ENCODE measurements at regions of chr1 and their contacts with region 1.

Region 1: DNA sequence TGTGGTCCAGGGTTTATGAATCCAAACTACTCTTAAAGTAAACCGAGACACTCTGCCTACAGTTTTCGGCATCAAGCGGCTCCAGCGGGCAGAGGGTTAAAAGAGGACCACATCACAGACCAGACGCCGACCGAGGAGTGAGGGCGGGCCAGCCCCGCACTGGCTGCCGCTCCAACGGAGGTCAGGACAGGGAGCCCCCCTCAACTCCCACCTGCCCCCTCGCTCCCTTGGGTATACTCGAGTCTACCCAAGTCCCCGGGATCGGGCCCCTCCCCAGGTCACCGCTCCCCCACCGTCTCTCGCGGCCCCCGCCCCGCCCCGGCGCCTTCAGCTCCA is 312 bp downstream of the ARNT start:
- DNase-seq: peak in 1 of 4 experiments; percentile 78
- ATAC-seq: peak; percentile 78
- H3K4me3 ChIP-seq: peak overlapping the region; percentile 72
- H3K27ac ChIP-seq: peak overlapping the region; percentile 80
- H3K4me1 ChIP-seq: peaks cover 4 to 8% of the 10 kb centered on the region in 2 experiments; a peak in 3 of 5 replicates
- H3K27me3 ChIP-seq: no peaks in the 10 kb centered on the region
- CTCF ChIP-seq: no peak
- EP300 ChIP-seq: no peak
- POLR2A ChIP-seq: no peak
- RAD21 ChIP-seq: no peak

Region 2: GRCh38 chr1:150730130-150730721 is 145.9 kb before region 1 on chr1:
- CTCF ChIA-PET with region 1: no interaction called
- POLR2A ChIA-PET with region 1: no interaction called
- in situ Hi-C with region 1: no loop called
- intact Hi-C with region 1: no loop called
- DNase-seq: no peak
- ATAC-seq: no peak
- H3K4me3 ChIP-seq: no peak overlapping the region
- H3K27ac ChIP-seq: no peak overlapping the region
- H3K4me1 ChIP-seq: no peaks in the 10 kb centered on the region; a peak in 1 of 5 replicates
- H3K27me3 ChIP-seq: no peaks in the 10 kb centered on the region
- CTCF ChIP-seq: no peak
- EP300 ChIP-seq: no peak
- POLR2A ChIP-seq: no peak
- RAD21 ChIP-seq: no peak

Region 3: GRCh38 chr1:150925816-150926741 is 50.0 kb after region 1 on chr1 and contains the start of gene SETDB1:
- CTCF ChIA-PET with region 1: no interaction called
- POLR2A ChIA-PET with region 1: interaction called, 4 read pairs
- in situ Hi-C with region 1: no loop called
- intact Hi-C with region 1: loop called (anchors 5 kb)
- DNase-seq: peak; percentile 91 to 98 (median 94)
- ATAC-seq: peak; percentile 97
- H3K4me3 ChIP-seq: peak within 1 kb of the TSS; percentile 70
- H3K27ac ChIP-seq: peak within 1 kb of the TSS; percentile 90
- H3K4me1 ChIP-seq: peaks cover 3 to 9% of the 10 kb centered on the region in 2 experiments; a peak in 2 of 5 replicates
- H3K27me3 ChIP-seq: no peaks in the 10 kb centered on the region
- CTCF ChIP-seq: peak; percentile 23 to 42 (median 25); a peak in 3 of 6 replicates
- EP300 ChIP-seq: peak; percentile 67
- POLR2A ChIP-seq: peak; percentile 85
- RAD21 ChIP-seq: peak in 1 of 2 experiments; percentile 16; a peak in 1 of 4 replicates
- polyA plus RNA-seq, gene SETDB1: 21.5 to 21.8 TPM

Region 4: DNA sequence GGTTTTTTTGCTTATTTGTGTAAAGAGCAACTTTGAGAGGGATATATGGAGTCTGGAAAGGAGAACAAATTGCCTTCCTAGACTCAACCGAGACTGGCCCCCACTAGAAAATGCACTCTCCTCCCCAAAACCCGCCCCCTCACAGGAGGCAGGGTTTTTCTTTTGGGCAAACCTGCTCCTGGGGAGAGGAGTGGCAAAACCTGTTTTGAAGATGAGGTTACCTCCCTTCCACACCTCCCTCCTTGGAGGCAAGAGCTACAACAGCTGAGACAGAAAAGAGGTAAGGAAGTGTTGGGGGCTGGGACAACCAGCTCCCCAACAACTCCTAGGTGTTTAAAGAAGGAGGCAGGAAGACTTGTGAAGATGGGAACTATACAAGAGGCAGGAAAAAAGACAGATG is 160.3 kb after region 1 on chr1 and contains the start of gene BNIPL:
- CTCF ChIA-PET with region 1: no interaction called
- POLR2A ChIA-PET with region 1: no interaction called
- in situ Hi-C with region 1: no loop called
- intact Hi-C with region 1: no loop called
- DNase-seq: no peak
- ATAC-seq: peak; percentile 16; the same call in 2 of the 3 replicates
- H3K4me3 ChIP-seq: no peak within 1 kb of the TSS
- H3K27ac ChIP-seq: no peak within 1 kb of the TSS
- H3K4me1 ChIP-seq: peaks cover 4 to 9% of the 10 kb centered on the region in 2 experiments; a peak in 2 of 5 replicates
- H3K27me3 ChIP-seq: no peaks in the 10 kb centered on the region
- CTCF ChIP-seq: no peak
- EP300 ChIP-seq: no peak
- POLR2A ChIP-seq: peak; percentile 15; the same call in 1 of the 2 replicates
- RAD21 ChIP-seq: no peak
- polyA plus RNA-seq, gene BNIPL: 0.08 to 0.31 TPM

Region 5: GRCh38 chr1:151222130-151222529 is 346.0 kb after region 1 on chr1:
- CTCF ChIA-PET with region 1: no interaction called
- POLR2A ChIA-PET with region 1: no interaction called
- in situ Hi-C with region 1: no loop called
- intact Hi-C with region 1: no loop called
- DNase-seq: no peak
- ATAC-seq: no peak
- H3K4me3 ChIP-seq: no peak overlapping the region
- H3K27ac ChIP-seq: no peak overlapping the region
- H3K4me1 ChIP-seq: no peaks in the 10 kb centered on the region
- H3K27me3 ChIP-seq: no peaks in the 10 kb centered on the region
- CTCF ChIP-seq: no peak
- EP300 ChIP-seq: no peak
- POLR2A ChIP-seq: no peak
- RAD21 ChIP-seq: no peak

Measured in K562 (cell line).